ENCODE measurements at regions of chr20 and their contacts with region 1.

Region 1: GRCh38 chr20:58829531-58829941 is 21.2 kb downstream of the GNAS-AS1 start:
- DNase-seq: no peak

Region 2: DNA sequence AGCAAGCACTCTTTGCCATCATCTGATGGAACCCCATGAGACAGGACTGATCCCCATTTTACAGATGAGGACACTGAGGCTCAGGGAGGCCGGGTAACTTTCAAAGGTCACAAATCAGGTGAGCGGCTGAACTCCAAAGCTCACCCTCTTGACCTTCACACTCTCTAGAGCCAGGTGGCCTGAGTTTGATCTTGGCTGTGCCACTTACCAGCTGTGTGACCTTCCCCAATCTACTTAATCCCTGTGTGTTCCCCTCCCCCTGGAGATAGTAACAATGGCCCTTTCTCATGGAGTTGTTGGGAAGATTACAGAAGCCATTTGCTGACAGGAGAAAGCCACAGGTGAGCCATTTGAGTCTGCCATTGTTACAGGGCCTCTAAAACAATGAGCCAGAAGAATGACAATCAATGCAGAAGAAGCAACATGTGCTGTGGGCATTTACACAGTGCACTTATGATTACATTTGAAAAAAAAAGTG is 1597.5 kb before region 1 on chr20:
- intact Hi-C with region 1: loop called in 1 of 2 experiments (anchors 5 kb)
- DNase-seq: no peak

Region 3: GRCh38 chr20:58778760-58779159 is 50.8 kb before region 1 on chr20:
- intact Hi-C with region 1: no loop called
- DNase-seq: peak; percentile 25

Measured in posterior vena cava (tissue), 2 donors.